H1 (cell line): ENCODE measurements at regions of chr6 and their contacts with region 1.

Region 1: DNA sequence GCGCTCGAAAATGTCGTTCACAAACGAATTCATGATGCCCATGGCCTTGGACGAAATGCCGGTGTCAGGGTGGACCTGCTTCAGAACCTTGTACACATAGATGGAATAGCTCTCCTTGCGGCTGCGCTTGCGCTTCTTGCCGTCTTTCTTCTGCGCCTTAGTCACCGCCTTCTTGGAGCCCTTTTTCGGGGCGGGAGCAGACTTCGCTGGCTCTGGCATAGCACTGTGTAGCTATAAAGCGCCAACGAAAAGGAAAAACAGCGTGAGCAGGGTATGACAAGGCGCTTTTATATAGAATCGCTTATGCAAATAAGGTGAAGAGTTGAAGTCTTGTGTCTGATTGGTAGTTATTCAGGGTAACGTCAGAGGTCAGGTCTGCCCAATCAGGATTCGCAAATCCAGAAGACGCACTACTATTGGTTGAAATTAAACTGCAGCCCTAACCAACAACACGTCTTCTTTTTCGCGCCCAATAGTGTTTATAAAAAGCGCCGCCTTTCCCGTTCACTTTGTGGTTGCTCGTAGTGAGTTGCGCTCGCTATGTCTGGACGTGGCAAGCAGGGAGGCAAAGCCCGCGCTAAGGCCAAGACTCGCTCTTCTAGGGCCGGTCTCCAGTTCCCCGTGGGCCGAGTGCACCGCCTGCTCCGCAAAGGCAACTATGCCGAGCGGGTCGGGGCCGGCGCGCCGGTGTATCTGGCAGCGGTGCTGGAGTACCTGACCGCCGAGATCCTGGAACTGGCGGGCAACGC is 114.8 kb upstream of the PRSS16 start:
- DNase-seq: peak; percentile 95 to 98
- H3K4me3 ChIP-seq: peak overlapping the region; percentile 89 to 98 (median 90)
- H3K27ac ChIP-seq: peak overlapping the region; percentile 96
- H3K4me1 ChIP-seq: peaks cover 0 to 5% (median 0%) of the 10 kb centered on the region in 4 experiments; a peak in 2 of 7 replicates
- H3K27me3 ChIP-seq: no peaks in the 10 kb centered on the region
- CTCF ChIP-seq: no peak
- EP300 ChIP-seq: no peak
- POLR2A ChIP-seq: peak; percentile 98 to 99
- RAD21 ChIP-seq: no peak

Region 2: GRCh38 chr6:26196846-26197648 is 935.7 kb before region 1 on chr6:
- CTCF ChIA-PET with region 1: no interaction called
- POLR2A ChIA-PET with region 1: interaction called, 73 read pairs
- DNase-seq: peak in 1 of 2 experiments; percentile 76
- H3K4me3 ChIP-seq: peak overlapping the region; percentile 85 to 98 (median 89)
- H3K27ac ChIP-seq: peak overlapping the region; percentile 82
- H3K4me1 ChIP-seq: peaks cover 0 to 1% (median 0%) of the 10 kb centered on the region in 4 experiments; a peak in 1 of 7 replicates
- H3K27me3 ChIP-seq: no peaks in the 10 kb centered on the region
- CTCF ChIP-seq: no peak
- EP300 ChIP-seq: no peak
- POLR2A ChIP-seq: peak; percentile 99
- RAD21 ChIP-seq: no peak

Region 3: DNA sequence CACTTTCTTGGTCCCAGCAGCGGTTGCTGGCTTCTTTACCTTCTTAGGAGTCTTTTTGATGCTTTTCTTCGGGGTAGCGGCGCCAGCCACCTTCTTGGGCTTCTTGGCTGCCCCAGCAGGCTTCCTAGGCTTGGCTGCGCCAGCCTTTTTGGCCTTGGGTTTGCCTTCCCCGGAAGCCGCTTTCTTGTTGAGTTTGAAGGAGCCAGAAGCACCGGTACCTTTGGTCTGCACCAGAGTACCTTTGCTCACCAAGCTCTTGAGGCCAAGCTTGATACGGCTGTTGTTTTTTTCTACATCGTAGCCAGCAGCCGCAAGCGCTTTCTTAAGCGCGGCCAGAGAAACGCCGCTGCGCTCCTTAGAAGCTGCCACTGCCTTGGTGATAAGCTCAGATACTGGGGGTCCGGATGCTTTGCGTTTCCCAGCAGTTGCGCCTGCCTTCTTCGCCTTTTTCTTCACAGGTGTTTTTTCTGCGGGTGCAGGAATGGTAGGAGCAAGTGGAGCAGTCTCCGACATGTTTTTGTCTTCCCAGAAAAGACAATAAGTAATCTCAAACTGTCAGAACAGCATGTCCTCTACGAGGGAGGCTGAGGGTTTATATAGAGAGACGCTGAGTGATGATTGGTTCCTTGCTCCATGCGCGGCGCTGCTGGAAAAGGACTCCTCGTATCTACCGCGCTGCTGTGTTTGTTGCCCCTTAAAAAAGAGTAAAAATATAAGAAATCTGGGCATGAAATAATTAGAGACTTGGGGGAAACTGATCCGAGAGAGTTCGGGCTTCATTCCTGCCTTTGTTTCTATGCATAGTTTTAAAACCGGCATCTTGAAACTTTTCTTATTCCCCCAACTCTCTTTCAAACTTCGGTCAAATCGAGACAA is 898.0 kb before region 1 on chr6:
- CTCF ChIA-PET with region 1: no interaction called
- POLR2A ChIA-PET with region 1: interaction called, 41 read pairs
- DNase-seq: peak in 1 of 2 experiments; percentile 85
- H3K4me3 ChIP-seq: peak overlapping the region; percentile 83 to 91 (median 88)
- H3K27ac ChIP-seq: peak overlapping the region; percentile 93
- H3K4me1 ChIP-seq: peaks cover 0 to 3% (median 0%) of the 10 kb centered on the region in 4 experiments; a peak in 3 of 7 replicates
- H3K27me3 ChIP-seq: no peaks in the 10 kb centered on the region
- CTCF ChIP-seq: no peak
- EP300 ChIP-seq: no peak
- POLR2A ChIP-seq: peak; percentile 86
- RAD21 ChIP-seq: no peak

Region 4: GRCh38 chr6:27146706-27147505 is 14.2 kb after region 1 on chr6:
- CTCF ChIA-PET with region 1: interaction called, 6 read pairs
- POLR2A ChIA-PET with region 1: interaction called, 824 read pairs
- DNase-seq: peak; percentile 89 to 93
- H3K4me3 ChIP-seq: peak overlapping the region; percentile 60 to 86 (median 76)
- H3K27ac ChIP-seq: peak overlapping the region; percentile 98
- H3K4me1 ChIP-seq: peaks cover 0 to 11% (median 1%) of the 10 kb centered on the region in 4 experiments; a peak in 4 of 7 replicates
- H3K27me3 ChIP-seq: no peaks in the 10 kb centered on the region
- CTCF ChIP-seq: no peak
- EP300 ChIP-seq: 0 out of 3 replicates have a peak, but pooled peaks of 1 of the 2 experiments have one; percentile 16
- POLR2A ChIP-seq: peak; percentile 98 to 99
- RAD21 ChIP-seq: no peak

Region 5: GRCh38 chr6:27825025-27825793 is 692.5 kb after region 1 on chr6:
- CTCF ChIA-PET with region 1: no interaction called
- POLR2A ChIA-PET with region 1: interaction called, 44 read pairs
- DNase-seq: no peak
- H3K4me3 ChIP-seq: peak overlapping the region; percentile 59 to 90 (median 81)
- H3K27ac ChIP-seq: peak overlapping the region; percentile 95; the same call in 1 of the 2 replicates
- H3K4me1 ChIP-seq: peaks cover 0 to 3% (median 0%) of the 10 kb centered on the region in 4 experiments; a peak in 1 of 7 replicates
- H3K27me3 ChIP-seq: no peaks in the 10 kb centered on the region
- CTCF ChIP-seq: no peak
- EP300 ChIP-seq: no peak
- POLR2A ChIP-seq: peak in 1 of 2 experiments; percentile 32; a peak in 2 of 3 replicates
- RAD21 ChIP-seq: no peak